ENCODE measurements at regions of chr3 and their contacts with region 1.

Region 1: GRCh38 chr3:49856181-49857005 is at the start of gene TRAIP:
- DNase-seq: peak; percentile 86 to 97 (median 94)
- ATAC-seq: peak; percentile 99
- H3K4me3 ChIP-seq: peak within 1 kb of the TSS; percentile 58 to 79
- H3K4me3 Mint-ChIP-seq: peak within 1 kb of the TSS; percentile 84
- H3K27ac ChIP-seq: peak within 1 kb of the TSS; percentile 67 to 84
- H3K27ac Mint-ChIP-seq: peak within 1 kb of the TSS; percentile 86
- H3K4me1 ChIP-seq: peaks cover 14% of the 10 kb centered on the region
- H3K4me1 Mint-ChIP-seq: peaks cover 15% of the 10 kb centered on the region
- H3K27me3 ChIP-seq: no peaks in the 10 kb centered on the region
- H3K27me3 Mint-ChIP-seq: no peaks in the 10 kb centered on the region
- CTCF ChIP-seq: no peak
- total RNA-seq, gene TRAIP: 4.1 to 5.5 TPM

Region 2: DNA sequence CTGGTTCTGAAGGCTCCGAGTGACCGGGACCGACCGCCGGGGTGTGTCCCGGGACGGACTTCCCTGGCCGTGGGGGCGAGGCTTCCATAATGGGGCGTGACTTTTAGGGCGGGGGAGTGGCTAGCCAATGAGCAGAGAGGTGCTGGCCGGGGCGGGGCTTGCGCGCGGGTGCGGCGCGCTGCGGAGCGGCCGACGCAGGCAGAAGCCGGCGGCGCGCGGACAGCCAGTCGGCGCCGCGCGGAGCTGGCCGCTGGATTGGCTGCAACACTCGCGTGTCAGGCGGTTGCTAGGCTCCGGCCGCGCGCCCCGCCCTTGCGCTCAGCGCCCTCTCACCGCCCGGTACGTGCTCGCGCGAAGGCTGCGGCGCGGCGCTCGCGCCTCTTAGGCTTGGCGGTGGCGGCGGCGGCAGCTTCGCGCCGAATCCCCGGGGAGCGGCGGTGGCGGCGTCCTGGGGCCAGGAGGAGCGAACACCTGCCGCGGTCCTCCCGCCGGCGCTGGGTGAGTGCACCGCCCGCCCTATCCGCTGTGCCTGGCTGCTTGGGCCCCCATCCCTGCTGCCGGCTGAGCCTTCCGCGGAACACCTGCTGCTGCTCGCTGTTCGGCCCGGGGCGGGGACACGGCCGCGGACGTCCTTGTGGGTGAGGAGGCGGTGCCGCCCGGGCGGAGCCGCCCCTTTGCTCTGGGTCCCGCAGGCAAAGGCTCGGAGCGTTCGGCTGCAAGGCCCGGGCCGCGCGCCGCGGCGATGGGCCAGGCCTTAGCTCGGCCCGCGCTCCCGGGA is 386.3 kb before region 1 on chr3 and contains the start of gene DAG1:
- CTCF ChIA-PET with region 1: no interaction called
- POLR2A ChIA-PET with region 1: no interaction called
- intact Hi-C with region 1: loop called in 1 of 2 experiments (anchors 2 kb)
- DNase-seq: peak; percentile 89 to 99 (median 95)
- ATAC-seq: peak; percentile 85
- H3K4me3 ChIP-seq: peak within 1 kb of the TSS; percentile 83 to 97
- H3K4me3 Mint-ChIP-seq: peak within 1 kb of the TSS; percentile 88
- H3K27ac ChIP-seq: peak within 1 kb of the TSS; percentile 86 to 87
- H3K27ac Mint-ChIP-seq: peak within 1 kb of the TSS; percentile 94
- H3K4me1 ChIP-seq: peaks cover 21% of the 10 kb centered on the region
- H3K4me1 Mint-ChIP-seq: peaks cover 24% of the 10 kb centered on the region
- H3K27me3 ChIP-seq: no peaks in the 10 kb centered on the region
- H3K27me3 Mint-ChIP-seq: no peaks in the 10 kb centered on the region
- CTCF ChIP-seq: no peak
- total RNA-seq, gene DAG1: 17.0 to 19.9 TPM

Region 3: DNA sequence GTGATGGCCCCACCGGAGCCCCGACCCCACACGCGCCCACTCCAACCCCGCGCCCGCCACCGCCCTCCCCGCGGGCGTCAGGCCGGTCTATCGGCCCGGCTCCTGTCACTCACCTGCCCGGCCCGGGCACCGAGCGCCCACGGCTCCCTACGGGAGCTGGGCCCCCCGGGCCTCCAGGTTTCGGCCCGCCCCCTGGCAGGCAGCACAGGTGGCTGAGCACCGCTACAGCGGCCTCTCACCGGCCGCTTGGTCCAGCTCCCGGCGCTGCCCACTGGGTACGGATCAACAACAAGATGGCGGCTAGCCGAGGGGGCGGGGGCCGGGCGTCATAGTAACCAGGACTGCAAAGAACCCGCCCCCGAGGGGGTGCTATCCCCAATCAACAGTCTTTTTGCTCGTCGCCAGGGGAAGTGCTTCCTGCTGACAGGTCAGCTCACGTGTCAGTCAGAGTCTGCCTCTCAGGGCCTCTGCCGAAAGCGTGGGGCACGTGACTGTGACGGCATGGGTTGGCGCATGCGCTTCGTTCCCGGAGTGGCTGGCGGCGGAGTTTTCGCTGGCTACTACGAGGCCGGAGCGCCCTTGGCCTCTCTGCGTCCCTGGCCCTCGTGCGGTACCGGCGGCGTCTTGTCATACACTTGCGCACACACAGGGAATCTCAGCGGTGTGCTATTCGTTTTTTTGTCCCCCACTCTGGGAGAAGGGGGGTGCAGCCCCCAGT is 70.0 kb before region 1 on chr3 and contains the start of gene IP6K1:
- CTCF ChIA-PET with region 1: no interaction called
- POLR2A ChIA-PET with region 1: interaction called, 4 read pairs
- intact Hi-C with region 1: loop called (anchors 1 kb)
- DNase-seq: peak; percentile 98 to 100 (median 99)
- ATAC-seq: peak; percentile 98
- H3K4me3 ChIP-seq: peak within 1 kb of the TSS; percentile 86 to 87
- H3K4me3 Mint-ChIP-seq: peak within 1 kb of the TSS; percentile 95
- H3K27ac ChIP-seq: peak within 1 kb of the TSS; percentile 87 to 94
- H3K27ac Mint-ChIP-seq: peak within 1 kb of the TSS; percentile 99
- H3K4me1 ChIP-seq: peaks cover 29% of the 10 kb centered on the region
- H3K4me1 Mint-ChIP-seq: peaks cover 40% of the 10 kb centered on the region
- H3K27me3 ChIP-seq: no peaks in the 10 kb centered on the region
- H3K27me3 Mint-ChIP-seq: no peaks in the 10 kb centered on the region
- CTCF ChIP-seq: no peak
- total RNA-seq, gene IP6K1: 34.3 to 36.6 TPM

Region 4: DNA sequence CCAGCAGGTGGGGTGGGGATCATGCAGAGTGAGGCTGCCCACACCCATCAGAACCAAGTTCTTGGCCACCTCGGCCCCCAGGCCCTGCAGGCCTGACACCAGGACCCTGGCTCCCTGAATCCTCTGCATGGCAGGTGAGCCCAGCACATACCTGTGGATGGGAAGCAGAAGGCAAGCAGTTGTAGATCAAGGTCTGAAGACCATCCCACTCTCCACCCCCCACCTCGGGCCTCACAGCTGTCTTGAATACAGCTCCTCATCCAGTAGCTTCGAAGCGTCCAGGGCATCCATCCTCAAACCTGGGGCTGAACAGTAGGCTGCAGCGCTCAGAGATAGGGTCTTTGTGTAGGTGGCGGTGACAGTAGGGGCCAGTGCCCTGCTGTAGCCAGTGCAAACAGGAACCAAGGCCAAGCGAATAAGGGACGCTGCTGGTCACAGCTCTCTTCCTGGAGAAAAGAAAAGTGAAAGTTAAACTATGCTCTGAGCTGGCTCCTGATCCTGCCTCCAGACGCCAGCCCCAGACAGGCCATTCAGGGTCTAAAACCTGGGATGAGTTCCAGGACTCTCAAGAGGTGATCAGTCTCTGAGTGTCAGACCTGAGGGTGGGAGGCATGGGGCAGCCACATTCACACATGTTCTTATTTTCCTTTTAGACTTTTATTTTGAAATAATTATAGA is 42.8 kb before region 1 on chr3 and contains the start of gene UBA7:
- CTCF ChIA-PET with region 1: no interaction called
- POLR2A ChIA-PET with region 1: interaction called, 5 read pairs
- intact Hi-C with region 1: loop called in 1 of 2 experiments (anchors 1 kb)
- DNase-seq: peak in 6 of 9 experiments; percentile 12 to 73 (median 48)
- ATAC-seq: peak; percentile 91
- H3K4me3 ChIP-seq: peak within 1 kb of the TSS; percentile 71 to 78
- H3K4me3 Mint-ChIP-seq: peak within 1 kb of the TSS; percentile 97
- H3K27ac ChIP-seq: peak within 1 kb of the TSS; percentile 62 to 88
- H3K27ac Mint-ChIP-seq: peak within 1 kb of the TSS; percentile 98
- H3K4me1 ChIP-seq: peaks cover 29% of the 10 kb centered on the region
- H3K4me1 Mint-ChIP-seq: peaks cover 46% of the 10 kb centered on the region
- H3K27me3 ChIP-seq: no peaks in the 10 kb centered on the region
- H3K27me3 Mint-ChIP-seq: no peaks in the 10 kb centered on the region
- CTCF ChIP-seq: no peak
- total RNA-seq, gene UBA7: 196 to 206 TPM

Region 5: DNA sequence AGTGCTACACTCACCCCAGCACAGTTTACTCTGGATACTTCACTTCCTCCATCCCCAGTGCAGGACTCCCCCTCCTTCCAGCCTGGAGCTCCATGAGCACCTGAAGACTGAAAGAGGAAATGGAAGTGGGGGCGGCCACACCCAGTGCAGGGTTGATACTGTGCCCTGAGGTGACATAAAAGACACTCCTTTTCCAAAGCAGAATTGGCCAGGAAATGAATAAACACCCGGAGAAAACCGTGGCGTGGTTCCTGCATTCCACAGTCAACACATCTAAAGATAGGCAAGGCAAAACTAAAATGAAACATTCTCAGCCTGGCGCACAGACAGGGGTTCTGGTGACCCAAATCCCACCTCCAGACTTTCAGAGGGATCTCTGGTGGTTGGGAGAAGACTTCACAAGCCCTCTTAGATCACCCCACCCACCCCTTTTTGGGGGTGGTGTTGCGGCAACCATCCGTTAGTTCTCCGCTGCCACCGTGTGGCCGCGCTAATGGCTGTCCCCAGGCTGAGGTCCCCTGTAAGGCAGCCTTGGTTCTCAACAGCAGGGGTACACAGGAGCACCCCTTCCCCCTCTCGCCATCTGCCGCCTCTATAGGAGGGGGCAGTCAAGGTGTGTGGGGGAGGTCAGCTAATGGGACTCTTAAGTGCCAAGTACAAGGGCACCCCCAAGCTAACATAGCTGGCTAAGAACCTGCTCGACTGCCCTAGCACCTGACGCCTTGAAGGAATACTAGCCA is 49.8 kb after region 1 on chr3:
- CTCF ChIA-PET with region 1: no interaction called
- POLR2A ChIA-PET with region 1: no interaction called
- intact Hi-C with region 1: loop called (anchors 1 to 2 kb)
- DNase-seq: peak; percentile 10 to 69 (median 48)
- ATAC-seq: peak; percentile 43
- H3K4me3 ChIP-seq: no peak overlapping the region
- H3K4me3 Mint-ChIP-seq: peak overlapping the region; percentile 37
- H3K27ac ChIP-seq: no peak overlapping the region
- H3K27ac Mint-ChIP-seq: peak overlapping the region; percentile 37
- H3K4me1 ChIP-seq: peaks cover 22% of the 10 kb centered on the region
- H3K4me1 Mint-ChIP-seq: peaks cover 29% of the 10 kb centered on the region
- H3K27me3 ChIP-seq: no peaks in the 10 kb centered on the region
- H3K27me3 Mint-ChIP-seq: no peaks in the 10 kb centered on the region
- CTCF ChIP-seq: peak; percentile 54

Region 6: GRCh38 chr3:49939858-49940666 is 83.7 kb after region 1 on chr3 and contains the start of gene RBM6:
- CTCF ChIA-PET with region 1: no interaction called
- POLR2A ChIA-PET with region 1: interaction called, 4 read pairs
- intact Hi-C with region 1: loop called in 1 of 2 experiments (anchors 1 kb)
- DNase-seq: peak; percentile 82 to 97 (median 93)
- ATAC-seq: peak; percentile 98
- H3K4me3 ChIP-seq: peak within 1 kb of the TSS; percentile 78 to 98
- H3K4me3 Mint-ChIP-seq: peak within 1 kb of the TSS; percentile 99
- H3K27ac ChIP-seq: peak within 1 kb of the TSS; percentile 67 to 99
- H3K27ac Mint-ChIP-seq: peak within 1 kb of the TSS; percentile 98
- H3K4me1 ChIP-seq: peaks cover 15% of the 10 kb centered on the region
- H3K4me1 Mint-ChIP-seq: peaks cover 30% of the 10 kb centered on the region
- H3K27me3 ChIP-seq: no peaks in the 10 kb centered on the region
- H3K27me3 Mint-ChIP-seq: no peaks in the 10 kb centered on the region
- CTCF ChIP-seq: no peak
- total RNA-seq, gene RBM6: 92.1 to 95.0 TPM

Measured in CD8-positive, alpha-beta T cell (primary cell).